ENCODE measurements at regions of chr2 and their contacts with region 1.

Region 1: DNA sequence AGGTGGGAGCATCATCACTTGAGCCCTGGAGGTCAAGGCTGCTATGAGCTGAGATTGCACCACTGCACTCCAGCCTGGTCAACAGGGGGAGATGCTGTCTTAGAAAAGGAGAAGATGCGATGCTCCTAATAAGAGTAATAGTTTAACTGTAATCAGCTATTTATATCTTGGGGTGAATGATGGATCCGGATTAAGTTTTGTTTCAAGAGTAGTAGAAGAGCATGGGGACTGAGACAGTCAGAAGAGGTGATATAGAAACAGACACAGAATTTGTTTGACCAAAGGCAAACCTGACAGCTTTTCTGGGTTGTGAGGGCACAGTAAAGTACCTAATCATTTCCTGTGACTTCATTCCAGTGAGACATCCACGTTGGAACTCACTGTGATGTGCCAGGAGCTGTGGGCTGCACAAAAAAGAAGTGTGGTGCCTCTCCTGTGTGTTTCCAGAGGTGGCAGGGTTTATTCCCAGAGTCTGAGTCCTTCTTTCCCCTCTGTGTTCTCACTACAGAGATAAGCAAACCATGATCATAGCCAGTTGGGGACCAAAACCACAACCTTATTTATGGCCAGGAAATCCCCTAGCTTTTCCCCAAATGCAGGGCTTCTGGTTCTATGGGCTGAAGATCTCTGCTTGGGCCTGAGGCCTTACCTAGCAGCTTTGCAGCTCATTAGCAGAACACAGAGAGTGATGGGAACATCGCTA is 113.7 kb downstream of the XRCC5 start:
- DNase-seq: no peak
- H3K4me3 Mint-ChIP-seq: no peak overlapping the region
- H3K27ac Mint-ChIP-seq: peak overlapping the region; percentile 9
- H3K4me1 Mint-ChIP-seq: peaks cover 15% of the 10 kb centered on the region
- H3K27me3 Mint-ChIP-seq: no peaks in the 10 kb centered on the region
- CTCF ChIP-seq: no peak

Region 2: GRCh38 chr2:216404010-216404618 is 181.3 kb after region 1 on chr2:
- CTCF ChIA-PET with region 1: no interaction called
- intact Hi-C with region 1: loop called (anchors 5 kb)
- DNase-seq: peak; percentile 46
- H3K4me3 Mint-ChIP-seq: no peak overlapping the region
- H3K27ac Mint-ChIP-seq: no peak overlapping the region
- H3K4me1 Mint-ChIP-seq: no peaks in the 10 kb centered on the region
- H3K27me3 Mint-ChIP-seq: peaks cover 65% of the 10 kb centered on the region
- CTCF ChIP-seq: peak; percentile 81

Region 3: DNA sequence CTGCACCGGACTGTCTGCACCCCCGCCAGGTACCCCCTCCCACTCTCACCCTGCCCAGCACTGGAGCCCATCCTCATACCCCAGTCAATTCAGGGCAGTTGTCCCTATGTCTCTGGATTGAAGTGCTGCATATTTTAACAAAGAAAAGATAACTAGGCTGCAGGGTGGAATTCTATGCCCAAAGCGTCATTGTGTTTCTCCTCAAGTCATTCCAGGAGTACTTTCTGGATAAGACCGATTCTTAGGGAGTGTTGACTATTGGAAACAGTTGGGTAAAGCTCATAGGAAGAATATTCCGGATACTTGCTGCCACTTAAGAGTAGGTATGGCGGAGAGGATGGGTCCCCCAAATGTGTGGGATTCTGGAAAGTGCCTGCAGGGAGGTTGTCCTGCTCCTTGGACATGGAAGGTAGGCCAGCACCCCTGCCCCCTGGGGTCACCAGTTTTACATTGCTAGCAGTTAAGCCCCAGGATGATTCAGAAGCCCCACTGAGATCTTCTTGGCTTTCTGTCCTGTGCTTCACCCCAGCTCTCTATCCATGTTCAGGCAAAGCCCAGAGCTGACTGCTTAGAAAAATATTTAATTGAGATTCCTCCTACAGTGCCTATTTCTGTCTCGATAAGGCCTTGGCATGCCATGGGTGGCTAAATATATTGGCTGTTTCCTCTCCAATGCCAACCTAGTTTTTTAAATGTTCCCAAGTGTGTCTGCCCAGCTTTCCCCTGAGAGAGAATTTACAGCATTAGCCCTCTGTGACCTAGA is 324.0 kb after region 1 on chr2:
- CTCF ChIA-PET with region 1: no interaction called
- intact Hi-C with region 1: no loop called
- DNase-seq: no peak
- H3K4me3 Mint-ChIP-seq: no peak overlapping the region
- H3K27ac Mint-ChIP-seq: no peak overlapping the region
- H3K4me1 Mint-ChIP-seq: no peaks in the 10 kb centered on the region
- H3K27me3 Mint-ChIP-seq: peaks cover 28% of the 10 kb centered on the region
- CTCF ChIP-seq: no peak

Measured in Calu3 (cell line).